ENCODE measurements at regions of chr21 and their contacts with region 1.

Region 1: DNA sequence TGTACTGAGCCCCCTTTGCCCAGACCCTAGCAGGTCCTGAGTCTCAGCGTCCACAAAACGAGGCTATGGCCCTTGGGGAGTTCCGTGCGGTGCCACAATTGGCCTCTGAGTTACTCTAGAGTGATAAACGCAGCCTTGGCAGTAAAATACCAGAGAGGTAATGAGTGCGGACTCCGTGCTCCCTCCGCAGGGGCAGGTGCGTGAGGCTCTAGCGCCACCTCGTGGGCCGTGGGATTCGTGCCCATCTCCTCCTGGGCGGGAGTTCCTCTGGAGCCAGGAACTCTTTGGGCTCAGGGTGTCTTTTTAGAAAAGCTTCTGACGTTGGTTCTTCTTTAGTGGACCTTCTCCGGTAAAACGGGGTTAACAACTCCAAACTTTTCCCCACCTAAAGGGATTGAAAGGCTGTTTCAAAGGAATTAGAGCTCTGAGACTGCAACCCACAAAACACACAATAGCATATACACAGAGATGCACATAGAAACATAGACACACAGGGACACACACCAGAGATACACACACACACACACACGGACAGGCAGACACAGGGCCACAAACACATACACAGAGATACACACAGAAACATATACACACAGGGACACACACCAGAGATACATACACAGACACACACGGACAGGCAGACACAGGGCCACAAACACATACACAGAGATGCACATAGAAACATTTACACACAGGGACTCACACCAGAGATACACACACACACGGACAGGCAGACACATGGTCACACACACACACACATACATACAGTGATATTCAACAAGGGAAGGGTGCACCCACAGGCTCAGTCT is 99.4 kb downstream of the KCNJ15 start:
- DNase-seq: peak; percentile 30
- ATAC-seq: no peak
- H3K4me3 Mint-ChIP-seq: no peak overlapping the region
- H3K27ac Mint-ChIP-seq: no peak overlapping the region
- H3K4me1 Mint-ChIP-seq: no peaks in the 10 kb centered on the region
- H3K27me3 Mint-ChIP-seq: peaks cover 8% of the 10 kb centered on the region
- CTCF ChIP-seq: no peak

Region 2: DNA sequence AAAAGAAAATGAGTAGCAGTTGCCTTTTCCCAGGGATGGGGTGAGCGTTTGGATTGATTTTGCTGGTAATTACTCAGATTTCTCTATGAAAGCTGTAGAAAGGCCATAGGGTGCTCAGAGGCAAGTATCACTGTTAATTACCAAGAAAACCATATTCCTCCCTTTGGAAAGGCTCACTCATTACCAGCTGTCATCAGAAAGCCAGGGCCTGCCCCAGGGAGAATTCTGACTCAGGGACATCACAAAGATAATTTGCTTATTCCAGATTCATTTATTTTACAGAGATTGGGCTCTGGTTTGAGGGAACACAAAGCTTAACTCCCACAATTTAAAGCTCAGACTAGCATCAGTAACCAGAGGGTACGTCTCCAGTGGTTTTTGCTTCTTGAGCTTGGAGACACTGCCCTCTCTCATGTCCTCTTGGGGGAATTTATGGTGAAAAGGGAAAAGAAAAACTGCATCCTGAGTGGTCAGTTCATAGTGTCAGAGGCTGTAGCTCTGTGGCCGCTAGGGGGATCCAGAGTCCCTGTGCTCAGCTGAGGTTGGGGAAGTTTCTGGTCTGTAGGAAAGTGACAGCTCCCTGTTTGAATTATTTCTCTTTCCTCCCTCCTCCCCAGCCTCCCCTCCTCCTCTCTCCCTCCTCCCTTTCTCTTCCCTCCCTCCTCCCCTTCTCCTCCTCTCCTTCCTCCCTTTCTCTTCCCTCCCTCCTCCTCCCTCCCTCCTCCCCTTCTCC is 644.2 kb before region 1 on chr21:
- CTCF ChIA-PET with region 1: interaction called, 3 read pairs
- POLR2A ChIA-PET with region 1: no interaction called
- intact Hi-C with region 1: loop called (anchors 5 kb)
- DNase-seq: no peak
- ATAC-seq: peak; percentile 50
- H3K4me3 Mint-ChIP-seq: no peak overlapping the region
- H3K27ac Mint-ChIP-seq: no peak overlapping the region
- H3K4me1 Mint-ChIP-seq: no peaks in the 10 kb centered on the region
- H3K27me3 Mint-ChIP-seq: peaks cover 12% of the 10 kb centered on the region
- CTCF ChIP-seq: no peak

Region 3: DNA sequence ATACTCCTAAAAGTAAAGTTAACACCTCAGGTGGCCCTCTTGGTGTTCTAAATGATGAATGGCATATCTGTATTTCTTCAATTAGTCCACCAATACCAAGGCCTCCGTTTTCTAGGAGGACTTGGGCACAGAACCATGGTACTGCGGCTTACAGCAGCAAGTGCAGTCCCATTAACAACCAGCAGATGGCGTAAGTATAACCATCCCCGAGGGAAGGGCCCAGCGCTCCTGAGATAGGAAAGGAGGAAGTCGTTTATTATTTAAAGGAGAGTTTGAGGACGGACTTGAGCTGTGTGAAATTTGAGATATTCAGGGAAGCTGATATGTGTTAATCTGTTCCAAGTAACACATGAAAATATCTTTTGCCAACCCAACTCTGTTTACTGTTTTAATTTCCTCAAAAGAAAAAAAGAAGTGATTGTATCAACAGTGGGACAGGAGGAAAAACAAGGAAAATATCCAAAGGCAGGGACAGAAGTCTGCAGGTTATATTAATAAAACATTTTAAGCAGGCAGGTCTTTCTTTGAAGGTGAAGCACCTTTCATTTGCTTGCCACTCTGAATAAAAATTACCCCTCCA is 137.1 kb before region 1 on chr21:
- CTCF ChIA-PET with region 1: no interaction called
- POLR2A ChIA-PET with region 1: no interaction called
- intact Hi-C with region 1: loop called (anchors 1 kb)
- DNase-seq: no peak
- ATAC-seq: no peak
- H3K4me3 Mint-ChIP-seq: no peak overlapping the region
- H3K27ac Mint-ChIP-seq: no peak overlapping the region
- H3K4me1 Mint-ChIP-seq: no peaks in the 10 kb centered on the region
- H3K27me3 Mint-ChIP-seq: peaks cover 4% of the 10 kb centered on the region
- CTCF ChIP-seq: peak; percentile 59

Region 4: GRCh38 chr21:38333301-38334272 is 22.6 kb before region 1 on chr21:
- CTCF ChIA-PET with region 1: no interaction called
- POLR2A ChIA-PET with region 1: no interaction called
- intact Hi-C with region 1: no loop called
- DNase-seq: no peak
- ATAC-seq: no peak
- H3K4me3 Mint-ChIP-seq: no peak overlapping the region
- H3K27ac Mint-ChIP-seq: no peak overlapping the region
- H3K4me1 Mint-ChIP-seq: no peaks in the 10 kb centered on the region
- H3K27me3 Mint-ChIP-seq: no peaks in the 10 kb centered on the region
- CTCF ChIP-seq: no peak

Measured in activated B cell treated with CpG ODN at 0.5 μM for 24 hours (primary cell).